T-cell (primary cell): ENCODE measurements at regions of chr1 and their contacts with region 1.

Region 1: GRCh38 chr1:8727809-8728213 is 89.6 kb downstream of the RERE start:
- DNase-seq: no peak
- ATAC-seq: no peak
- H3K4me3 ChIP-seq: no peak overlapping the region
- H3K4me3 Mint-ChIP-seq: no peak overlapping the region
- H3K27ac ChIP-seq: no peak overlapping the region
- H3K27ac Mint-ChIP-seq: no peak overlapping the region
- H3K4me1 ChIP-seq: no peaks in the 10 kb centered on the region
- H3K4me1 Mint-ChIP-seq: peaks cover 11 to 15% (median 11%) of the 10 kb centered on the region in 3 donors
- H3K27me3 ChIP-seq: no peaks in the 10 kb centered on the region
- H3K27me3 Mint-ChIP-seq: no peaks in the 10 kb centered on the region

Region 2: DNA sequence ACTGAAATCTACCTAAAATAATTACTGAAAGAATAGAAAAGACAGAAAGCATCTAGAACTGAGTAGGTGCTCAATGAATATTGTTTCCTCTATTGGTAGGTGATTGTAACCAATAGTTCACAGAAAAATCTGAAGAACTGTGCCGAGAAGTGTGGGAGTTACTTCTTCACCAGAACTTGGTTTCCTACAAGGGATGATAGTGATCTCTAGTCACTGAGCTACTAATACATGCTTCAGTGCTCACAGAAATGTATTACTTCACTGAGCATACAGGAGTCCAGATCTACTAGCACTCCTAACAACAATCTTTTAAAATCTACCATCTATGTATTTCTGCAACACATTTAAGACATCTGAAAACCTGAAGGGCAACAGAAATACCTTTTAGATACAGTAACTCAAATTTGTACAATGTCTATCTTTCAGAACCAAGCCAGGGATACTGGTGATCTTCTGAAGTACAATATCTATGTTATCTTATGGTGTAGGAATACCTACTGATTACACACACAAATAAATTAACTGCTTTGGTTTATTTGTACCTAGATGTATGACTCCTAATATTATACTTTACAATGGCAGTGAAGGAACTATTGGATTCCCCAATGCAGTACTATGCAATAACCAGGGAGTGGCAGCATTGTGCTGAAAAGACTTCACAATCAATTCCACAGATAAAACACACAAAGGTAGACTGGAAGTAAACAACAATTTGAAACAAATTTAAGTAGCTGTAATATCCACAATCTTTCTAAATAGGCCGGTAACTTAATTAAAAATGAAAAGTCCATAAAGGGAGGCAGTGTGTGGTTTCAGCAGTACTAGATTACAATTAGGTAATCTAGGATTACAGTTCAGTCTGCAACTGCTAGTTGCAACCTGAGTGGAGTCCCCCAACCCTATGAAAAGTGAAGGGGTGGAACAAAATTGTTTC is 166.9 kb before region 1 on chr1:
- CTCF ChIA-PET with region 1: interaction called, 11 to 23 read pairs
- POLR2A ChIA-PET with region 1: no interaction called
- DNase-seq: peak in 22 of 35 experiments; percentile 6 to 74 (median 21)
- ATAC-seq: peak; percentile 44 to 75 (median 70)
- H3K4me3 ChIP-seq: no peak overlapping the region
- H3K4me3 Mint-ChIP-seq: no peak overlapping the region
- H3K27ac ChIP-seq: no peak overlapping the region
- H3K27ac Mint-ChIP-seq: no peak overlapping the region
- H3K4me1 ChIP-seq: peaks cover 0 to 5% of the 10 kb centered on the region in 2 experiments
- H3K4me1 Mint-ChIP-seq: peaks cover 7 to 16% (median 12%) of the 10 kb centered on the region in 3 donors
- H3K27me3 ChIP-seq: no peaks in the 10 kb centered on the region
- H3K27me3 Mint-ChIP-seq: no peaks in the 10 kb centered on the region

Region 3: DNA sequence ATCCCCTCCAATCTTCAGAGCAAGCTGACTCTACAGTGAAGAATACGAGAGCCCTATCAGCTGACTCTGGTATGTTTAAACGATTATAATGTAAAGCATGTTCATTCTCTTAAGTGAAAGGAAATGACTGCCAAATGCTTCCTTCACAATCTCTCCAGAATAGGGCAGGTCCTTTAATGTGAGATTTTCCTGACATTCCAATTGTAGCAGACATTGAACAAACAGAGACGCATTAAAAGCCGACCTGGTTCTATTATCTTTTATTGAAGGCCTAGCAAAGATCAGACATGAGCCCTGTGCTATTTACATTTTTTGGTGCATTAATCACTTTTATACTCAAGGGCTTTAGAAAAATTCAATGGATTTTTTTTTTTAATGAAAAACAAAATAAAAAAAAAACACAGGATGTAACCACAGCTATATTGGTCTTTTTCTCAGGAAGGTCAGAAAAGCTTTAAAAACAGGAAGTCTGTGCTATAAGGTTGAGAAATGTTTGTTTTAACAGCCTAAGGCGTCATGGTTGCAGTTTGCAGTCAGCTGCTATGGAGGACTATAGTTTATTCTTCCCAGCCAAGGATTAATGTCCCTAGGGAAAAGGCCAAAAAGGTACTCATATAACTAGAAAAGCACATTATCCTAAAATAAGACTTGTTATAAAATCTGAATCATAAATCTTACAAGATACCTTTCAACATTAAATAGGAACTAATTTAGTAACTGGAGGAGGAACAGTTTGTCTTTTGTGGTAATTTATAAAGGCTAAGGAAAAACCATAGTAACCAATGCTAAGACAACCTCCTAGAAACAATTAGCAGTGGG is 15.2 kb before region 1 on chr1:
- CTCF ChIA-PET with region 1: no interaction called
- POLR2A ChIA-PET with region 1: no interaction called
- DNase-seq: peak in 1 of 35 experiments; percentile 28
- ATAC-seq: peak in 3 of 4 experiments; percentile 41 to 75 (median 55)
- H3K4me3 ChIP-seq: no peak overlapping the region
- H3K4me3 Mint-ChIP-seq: peak overlapping the region in 2 of 3 donors; percentile 42 to 44
- H3K27ac ChIP-seq: peak overlapping the region; percentile 28
- H3K27ac Mint-ChIP-seq: peak overlapping the region; percentile 25 to 78
- H3K4me1 ChIP-seq: peaks cover 4 to 10% of the 10 kb centered on the region in 2 experiments
- H3K4me1 Mint-ChIP-seq: peaks cover 16 to 28% (median 24%) of the 10 kb centered on the region in 3 donors
- H3K27me3 ChIP-seq: no peaks in the 10 kb centered on the region
- H3K27me3 Mint-ChIP-seq: peaks cover 0 to 7% of the 10 kb centered on the region in 2 donors

Region 4: DNA sequence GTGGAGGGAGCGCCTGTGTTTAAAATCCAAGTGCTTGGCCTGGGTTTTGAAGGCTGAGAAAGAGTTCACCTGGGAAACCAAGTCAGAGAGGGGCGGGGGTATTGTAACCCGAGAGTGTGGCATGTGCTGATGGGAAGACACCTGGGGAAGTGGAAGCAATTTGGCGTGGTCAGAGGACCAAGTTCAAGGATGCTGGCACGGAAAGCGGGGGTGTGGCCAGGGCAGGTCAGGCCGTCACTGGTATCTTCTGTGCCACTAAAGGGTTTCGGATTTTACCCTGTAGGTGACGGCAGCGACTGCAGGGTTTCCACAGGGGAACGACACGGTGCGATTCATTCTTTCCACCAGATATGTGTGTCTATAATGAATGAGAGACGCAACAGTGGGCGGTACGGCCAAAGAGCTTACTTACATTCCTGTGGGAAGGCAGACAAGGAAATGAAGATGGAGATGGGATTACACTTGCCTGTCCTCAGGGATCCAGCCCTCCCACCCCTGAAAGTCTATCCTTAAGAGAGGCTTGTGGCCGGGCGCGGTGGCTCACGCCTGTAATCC is 249.2 kb after region 1 on chr1:
- CTCF ChIA-PET with region 1: no interaction called
- POLR2A ChIA-PET with region 1: no interaction called
- DNase-seq: no peak
- ATAC-seq: no peak
- H3K4me3 ChIP-seq: no peak overlapping the region
- H3K4me3 Mint-ChIP-seq: no peak overlapping the region
- H3K27ac ChIP-seq: no peak overlapping the region
- H3K27ac Mint-ChIP-seq: no peak overlapping the region
- H3K4me1 ChIP-seq: peaks cover 0 to 3% of the 10 kb centered on the region in 2 experiments
- H3K4me1 Mint-ChIP-seq: peaks cover 3 to 21% (median 13%) of the 10 kb centered on the region in 3 donors
- H3K27me3 ChIP-seq: peaks cover 0 to 6% of the 10 kb centered on the region in 2 experiments
- H3K27me3 Mint-ChIP-seq: no peaks in the 10 kb centered on the region